Cardiac septum (tissue), 1 donor: ENCODE measurements at regions of chr17 and their contacts with region 1.

Region 1: DNA sequence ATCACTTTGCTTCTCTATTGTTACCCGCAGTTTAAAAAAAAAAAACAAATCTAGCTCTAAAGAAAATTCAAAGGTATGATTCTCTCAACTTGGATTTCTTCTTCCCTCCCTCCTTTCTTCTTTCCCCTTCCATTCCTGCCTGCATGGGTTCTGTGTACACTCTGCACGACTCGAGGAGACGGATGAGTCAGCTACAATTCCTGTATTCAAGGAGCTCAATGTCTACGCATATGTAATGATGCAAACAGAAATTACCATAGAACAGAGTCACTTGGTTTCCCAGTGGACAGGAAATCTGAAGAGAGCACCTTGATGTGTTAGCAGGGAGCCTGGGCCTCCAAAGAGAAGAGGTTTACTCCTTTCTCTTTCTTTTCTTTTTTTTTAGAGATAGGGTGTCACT is 92.3 kb downstream of the VPS53 start:
- DNase-seq: no peak

Region 2: DNA sequence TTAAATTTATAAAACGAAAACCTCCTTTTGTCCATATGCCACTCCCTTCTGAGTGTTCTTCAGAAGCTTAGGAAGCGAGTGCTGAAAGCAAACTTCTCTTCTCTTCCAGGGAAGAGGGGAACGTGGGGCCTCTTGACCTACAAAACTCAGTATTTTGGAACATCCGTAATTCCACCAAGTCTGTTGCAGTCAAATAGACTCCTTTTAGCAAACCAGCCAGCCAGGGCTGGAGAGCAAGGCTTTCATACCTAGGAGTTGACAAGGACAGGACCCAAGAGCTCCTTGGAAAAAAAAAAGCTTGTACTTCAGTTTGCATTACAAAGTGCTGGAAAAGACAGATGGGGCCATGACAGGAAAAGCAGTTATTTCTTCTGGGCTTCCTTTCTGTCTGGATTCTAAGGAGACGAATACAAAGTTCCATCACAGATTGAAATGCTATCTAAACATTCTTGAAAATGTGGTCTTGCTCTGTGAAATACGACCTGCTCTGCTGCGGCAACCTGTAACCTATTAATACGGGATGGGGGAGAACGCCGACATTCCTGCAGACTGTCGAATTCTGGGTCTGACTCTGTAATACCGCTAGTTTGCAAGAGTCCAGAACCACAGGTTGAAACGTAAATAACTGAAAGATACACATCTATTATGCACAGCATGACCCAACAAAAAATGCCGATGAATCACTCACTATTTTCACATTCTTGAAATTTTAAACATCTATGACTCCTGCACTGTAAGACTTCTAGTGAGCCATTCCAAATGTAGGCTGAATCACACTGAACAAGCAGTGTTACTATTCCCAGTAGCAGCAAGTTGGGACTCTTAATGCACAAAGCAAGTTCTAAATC is 71.7 kb after region 1 on chr17:
- intact Hi-C with region 1: loop called (anchors 10 kb)
- DNase-seq: no peak

Region 3: GRCh38 chr17:773467-774312 is 151.3 kb after region 1 on chr17:
- intact Hi-C with region 1: no loop called
- DNase-seq: no peak